Activated CD8-positive, alpha-beta T cell treated with anti-CD3 and anti-CD28 coated beads for 36 hours (primary cell): ENCODE measurements at regions of chr3 and their contacts with region 1.

Region 1: DNA sequence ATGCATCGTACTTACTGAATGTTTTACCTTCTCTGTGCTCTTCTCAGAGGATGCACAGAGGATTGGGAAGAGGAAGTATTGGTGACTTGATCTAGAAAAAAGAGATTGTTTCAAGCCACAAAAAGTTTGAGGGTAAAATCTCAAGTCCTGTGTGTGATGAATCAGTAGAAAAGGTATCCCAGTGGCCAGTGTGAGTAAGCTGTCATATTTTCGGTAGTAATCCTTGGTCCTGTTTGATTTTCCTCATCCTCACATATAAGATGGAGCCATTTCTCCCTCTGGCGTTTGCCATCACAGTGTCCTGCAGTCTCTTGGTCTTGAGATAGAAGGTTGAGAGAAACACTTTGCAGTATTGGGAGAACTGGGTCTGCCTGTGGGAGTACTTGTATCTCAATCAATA is 166.8 kb downstream of the LPP start:
- DNase-seq: no peak
- ATAC-seq: no peak
- H3K4me3 Mint-ChIP-seq: no peak overlapping the region
- H3K27ac Mint-ChIP-seq: no peak overlapping the region
- H3K4me1 Mint-ChIP-seq: peaks cover 58% of the 10 kb centered on the region
- H3K27me3 Mint-ChIP-seq: no peaks in the 10 kb centered on the region
- CTCF ChIP-seq: no peak

Region 2: GRCh38 chr3:188339410-188340295 is 18.9 kb after region 1 on chr3:
- CTCF ChIA-PET with region 1: interaction called, 4 read pairs
- POLR2A ChIA-PET with region 1: interaction called, 11 read pairs
- intact Hi-C with region 1: no loop called
- DNase-seq: peak; percentile 74
- ATAC-seq: peak; percentile 88
- H3K4me3 Mint-ChIP-seq: peak overlapping the region; percentile 68
- H3K27ac Mint-ChIP-seq: peak overlapping the region; percentile 95
- H3K4me1 Mint-ChIP-seq: peaks cover 42% of the 10 kb centered on the region
- H3K27me3 Mint-ChIP-seq: no peaks in the 10 kb centered on the region
- CTCF ChIP-seq: no peak

Region 3: DNA sequence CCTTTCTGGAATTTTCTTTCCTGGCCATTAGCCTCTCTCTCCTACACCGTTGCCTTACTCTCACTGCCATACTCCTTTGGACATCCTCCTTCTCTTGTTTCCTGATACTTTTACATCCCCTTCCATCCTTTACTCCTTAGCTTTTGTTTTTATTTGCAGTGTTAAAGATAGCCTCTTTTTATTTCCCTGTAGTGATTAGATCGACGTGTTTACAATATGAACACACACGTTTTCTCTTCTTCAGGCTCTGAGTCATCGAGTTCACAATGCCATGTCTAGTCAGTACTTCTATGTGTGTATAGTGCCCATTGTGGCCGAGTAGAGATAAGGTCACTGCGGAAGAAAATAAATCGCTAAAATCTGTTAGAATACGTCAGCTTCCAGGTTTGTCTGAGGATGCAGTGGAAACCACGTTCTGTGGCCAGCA is 41.7 kb after region 1 on chr3:
- CTCF ChIA-PET with region 1: no interaction called
- POLR2A ChIA-PET with region 1: interaction called, 4 read pairs
- intact Hi-C with region 1: loop called (anchors 2 kb)
- DNase-seq: peak; percentile 63
- ATAC-seq: peak; percentile 77
- H3K4me3 Mint-ChIP-seq: peak overlapping the region; percentile 52
- H3K27ac Mint-ChIP-seq: peak overlapping the region; percentile 81
- H3K4me1 Mint-ChIP-seq: peaks cover 49% of the 10 kb centered on the region
- H3K27me3 Mint-ChIP-seq: no peaks in the 10 kb centered on the region
- CTCF ChIP-seq: no peak

Region 4: GRCh38 chr3:188389711-188390342 is 69.1 kb after region 1 on chr3:
- CTCF ChIA-PET with region 1: no interaction called
- POLR2A ChIA-PET with region 1: no interaction called
- intact Hi-C with region 1: loop called (anchors 5 kb)
- DNase-seq: peak; percentile 85
- ATAC-seq: peak; percentile 93
- H3K4me3 Mint-ChIP-seq: peak overlapping the region; percentile 44
- H3K27ac Mint-ChIP-seq: peak overlapping the region; percentile 92
- H3K4me1 Mint-ChIP-seq: peaks cover 38% of the 10 kb centered on the region
- H3K27me3 Mint-ChIP-seq: no peaks in the 10 kb centered on the region
- CTCF ChIP-seq: no peak

Region 5: DNA sequence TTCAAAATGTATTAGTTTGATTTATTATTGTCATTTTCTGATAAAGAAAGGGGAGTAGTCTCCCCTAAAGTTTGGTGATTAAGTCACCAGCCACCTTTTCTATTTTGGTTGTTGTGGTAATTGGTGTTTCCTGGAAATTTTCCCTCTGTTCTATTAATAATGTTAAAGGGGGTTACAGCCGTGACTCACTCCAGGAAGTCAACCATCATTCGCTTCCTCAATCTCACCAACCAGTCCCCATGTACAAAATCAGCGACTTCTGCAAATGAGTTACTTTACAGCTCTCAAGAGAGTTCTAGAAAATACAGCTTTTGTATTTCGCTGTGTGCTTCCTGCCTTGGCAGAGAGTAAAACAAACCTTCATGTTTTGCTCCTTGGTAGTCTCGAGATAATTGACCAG is 118.3 kb after region 1 on chr3:
- CTCF ChIA-PET with region 1: no interaction called
- POLR2A ChIA-PET with region 1: no interaction called
- intact Hi-C with region 1: loop called (anchors 2 kb)
- DNase-seq: peak; percentile 63
- ATAC-seq: peak; percentile 87
- H3K4me3 Mint-ChIP-seq: peak overlapping the region; percentile 34
- H3K27ac Mint-ChIP-seq: peak overlapping the region; percentile 78
- H3K4me1 Mint-ChIP-seq: peaks cover 52% of the 10 kb centered on the region
- H3K27me3 Mint-ChIP-seq: no peaks in the 10 kb centered on the region
- CTCF ChIP-seq: no peak